Activated naive CD4-positive, alpha-beta T cell treated with anti-CD3 and anti-CD28 coated beads for 36 hours (primary cell): ENCODE measurements at regions of chr5 and their contacts with region 1.

Region 1: GRCh38 chr5:172106511-172107356 is 81.3 kb downstream of the STK10 start:
- DNase-seq: peak; percentile 71
- H3K4me3 Mint-ChIP-seq: no peak overlapping the region
- H3K27ac Mint-ChIP-seq: peak overlapping the region; percentile 50
- H3K4me1 Mint-ChIP-seq: peaks cover 40% of the 10 kb centered on the region
- H3K27me3 Mint-ChIP-seq: no peaks in the 10 kb centered on the region

Region 2: GRCh38 chr5:170312666-170313065 is 1794.1 kb before region 1 on chr5:
- CTCF ChIA-PET with region 1: no interaction called
- intact Hi-C with region 1: loop called (anchors 5 kb)
- DNase-seq: peak; percentile 90
- H3K4me3 Mint-ChIP-seq: peak overlapping the region; percentile 90
- H3K27ac Mint-ChIP-seq: peak overlapping the region; percentile 94
- H3K4me1 Mint-ChIP-seq: peaks cover 68% of the 10 kb centered on the region
- H3K27me3 Mint-ChIP-seq: no peaks in the 10 kb centered on the region

Region 3: DNA sequence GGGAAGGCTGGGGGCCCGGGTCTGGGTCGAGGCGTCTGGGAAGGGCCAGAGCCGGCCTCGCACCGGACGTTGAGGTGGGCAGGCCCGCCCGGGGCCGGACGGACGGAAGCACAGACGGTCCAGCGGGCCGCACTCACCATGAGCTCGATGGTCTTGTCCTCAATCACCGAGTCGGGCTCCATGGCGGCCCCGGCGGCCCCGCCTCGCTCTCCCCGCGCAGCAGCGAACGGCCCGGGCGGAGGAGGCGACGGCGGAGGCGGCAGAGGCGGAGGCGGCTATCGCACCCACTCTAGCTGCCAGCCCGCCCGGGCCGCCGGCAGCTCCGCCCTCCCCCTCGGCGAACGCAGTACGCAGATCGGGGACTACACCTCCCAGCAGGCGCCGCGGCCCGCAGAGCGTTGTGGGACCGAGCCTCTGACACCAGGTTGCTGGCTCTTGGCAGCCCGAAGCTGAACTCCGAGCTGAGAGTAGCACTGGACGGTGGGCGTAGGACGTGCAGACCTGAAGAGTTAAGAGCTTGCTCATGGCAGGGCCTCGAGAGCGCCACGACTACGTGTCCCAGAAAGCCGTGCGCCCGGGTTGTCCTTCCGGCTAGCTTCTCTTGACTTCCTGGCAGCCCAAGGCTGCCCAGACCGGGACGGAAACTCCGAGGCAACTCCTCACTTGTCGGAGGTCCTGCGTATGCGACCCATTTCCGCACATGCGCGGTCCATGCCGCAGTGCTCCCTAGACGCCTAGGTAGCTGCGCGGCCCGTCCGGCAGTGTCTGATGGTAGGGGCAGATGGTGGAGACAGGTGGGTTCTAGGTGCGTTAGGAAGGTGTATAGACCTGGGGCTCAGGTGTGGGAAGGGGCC is 100.2 kb before region 1 on chr5 and contains the start of gene FBXW11:
- CTCF ChIA-PET with region 1: interaction called, 3 read pairs
- intact Hi-C with region 1: loop called (anchors 1 kb)
- DNase-seq: peak; percentile 96
- H3K4me3 Mint-ChIP-seq: peak within 1 kb of the TSS; percentile 96
- H3K27ac Mint-ChIP-seq: peak within 1 kb of the TSS; percentile 99
- H3K4me1 Mint-ChIP-seq: peaks cover 46% of the 10 kb centered on the region
- H3K27me3 Mint-ChIP-seq: no peaks in the 10 kb centered on the region
- total RNA-seq, gene FBXW11: 32.8 to 35.5 TPM

Region 4: DNA sequence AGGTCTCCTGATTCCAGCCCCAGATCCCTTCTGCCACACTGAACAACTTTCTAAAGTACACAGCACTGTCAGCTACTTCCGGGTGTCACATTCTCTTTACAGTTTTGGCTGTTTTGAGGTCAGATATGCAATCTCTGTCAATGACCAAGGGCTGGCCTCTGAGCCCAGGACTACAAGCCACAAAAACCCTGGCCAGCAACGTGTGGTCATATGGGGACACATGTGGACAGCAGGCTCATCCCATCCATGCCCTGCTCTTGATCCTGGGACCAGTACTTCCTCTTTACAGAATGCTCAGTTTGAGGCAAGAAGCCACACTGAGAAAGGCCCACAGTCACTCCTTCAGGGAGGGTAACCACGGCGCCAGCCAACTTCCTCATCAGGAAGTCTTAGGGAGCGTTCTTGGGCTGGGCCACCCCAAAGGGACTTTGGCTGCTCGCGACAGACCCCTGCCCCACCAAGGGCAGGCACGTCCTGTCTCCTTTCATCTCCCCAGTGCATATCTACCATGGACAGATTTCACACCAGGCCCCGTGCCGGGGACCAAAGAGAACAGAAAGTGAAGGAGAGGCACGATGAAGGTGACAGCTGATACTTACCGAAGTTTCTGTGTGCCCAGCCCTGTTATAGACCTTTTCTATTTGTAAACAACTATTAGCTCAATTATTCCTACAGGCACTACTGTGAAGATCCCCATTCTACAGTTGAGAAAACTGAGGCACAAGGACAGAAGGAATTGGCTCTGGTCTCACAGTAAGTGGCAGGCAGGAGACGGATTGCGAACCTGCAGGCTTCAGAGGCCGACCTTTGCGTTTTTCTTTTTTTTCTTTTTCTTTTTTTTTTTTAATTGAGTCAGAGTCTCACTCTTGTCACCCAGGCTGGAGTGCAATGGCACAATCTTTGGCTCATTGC is 44.0 kb after region 1 on chr5:
- CTCF ChIA-PET with region 1: no interaction called
- intact Hi-C with region 1: loop called (anchors 1 kb)
- DNase-seq: peak; percentile 38
- H3K4me3 Mint-ChIP-seq: peak overlapping the region; percentile 64
- H3K27ac Mint-ChIP-seq: peak overlapping the region; percentile 91
- H3K4me1 Mint-ChIP-seq: peaks cover 77% of the 10 kb centered on the region
- H3K27me3 Mint-ChIP-seq: no peaks in the 10 kb centered on the region

Region 5: DNA sequence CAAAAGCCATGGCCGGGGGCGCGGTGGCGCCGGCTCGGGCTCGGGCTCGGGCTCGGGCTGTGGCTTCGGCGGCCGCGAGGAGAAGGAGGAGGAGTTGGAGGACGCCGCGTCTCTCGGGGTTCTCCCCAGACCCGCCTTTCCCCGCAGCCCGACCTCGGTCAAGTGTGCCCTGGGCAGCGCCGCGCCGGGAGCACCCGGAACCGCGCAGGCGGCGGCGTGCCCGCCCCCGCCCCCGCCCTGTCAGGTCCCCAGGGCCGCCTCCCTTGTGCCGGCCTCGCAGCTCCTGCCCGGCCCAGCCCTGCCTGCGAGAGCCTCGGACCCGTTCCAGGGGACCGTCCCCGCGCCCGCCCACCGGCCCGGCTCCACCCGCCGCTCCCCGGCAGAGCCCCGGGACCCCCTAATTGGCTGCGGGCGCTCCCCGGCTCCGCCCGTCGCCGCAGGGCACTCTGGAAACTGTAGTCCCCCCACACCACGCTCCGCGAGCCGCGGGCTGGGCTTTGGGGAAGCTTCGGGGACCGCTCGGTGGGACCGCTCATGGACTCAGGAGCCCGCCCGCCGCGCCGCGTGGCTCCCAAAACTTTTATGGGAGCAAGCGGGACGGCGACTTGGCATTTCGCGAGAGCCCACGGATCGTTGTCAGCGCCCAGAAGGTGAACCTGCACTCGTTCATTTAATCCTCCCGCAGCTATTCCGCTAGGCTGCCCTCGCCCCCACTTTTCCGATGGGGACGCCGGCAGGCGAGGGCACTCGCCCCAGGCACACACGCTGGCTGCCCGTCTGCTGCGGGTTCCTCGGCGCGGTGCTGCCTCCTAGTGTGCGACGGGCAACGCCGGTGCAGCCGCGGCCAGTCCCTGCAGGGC is 81.5 kb after region 1 on chr5 and contains the start of gene STK10:
- CTCF ChIA-PET with region 1: interaction called, 159 read pairs
- intact Hi-C with region 1: loop called (anchors 1 kb)
- DNase-seq: peak; percentile 92
- H3K4me3 Mint-ChIP-seq: peak within 1 kb of the TSS; percentile 91
- H3K27ac Mint-ChIP-seq: peak within 1 kb of the TSS; percentile 92
- H3K4me1 Mint-ChIP-seq: peaks cover 32% of the 10 kb centered on the region
- H3K27me3 Mint-ChIP-seq: no peaks in the 10 kb centered on the region
- total RNA-seq, gene STK10: 44.7 to 55.1 TPM

Region 6: DNA sequence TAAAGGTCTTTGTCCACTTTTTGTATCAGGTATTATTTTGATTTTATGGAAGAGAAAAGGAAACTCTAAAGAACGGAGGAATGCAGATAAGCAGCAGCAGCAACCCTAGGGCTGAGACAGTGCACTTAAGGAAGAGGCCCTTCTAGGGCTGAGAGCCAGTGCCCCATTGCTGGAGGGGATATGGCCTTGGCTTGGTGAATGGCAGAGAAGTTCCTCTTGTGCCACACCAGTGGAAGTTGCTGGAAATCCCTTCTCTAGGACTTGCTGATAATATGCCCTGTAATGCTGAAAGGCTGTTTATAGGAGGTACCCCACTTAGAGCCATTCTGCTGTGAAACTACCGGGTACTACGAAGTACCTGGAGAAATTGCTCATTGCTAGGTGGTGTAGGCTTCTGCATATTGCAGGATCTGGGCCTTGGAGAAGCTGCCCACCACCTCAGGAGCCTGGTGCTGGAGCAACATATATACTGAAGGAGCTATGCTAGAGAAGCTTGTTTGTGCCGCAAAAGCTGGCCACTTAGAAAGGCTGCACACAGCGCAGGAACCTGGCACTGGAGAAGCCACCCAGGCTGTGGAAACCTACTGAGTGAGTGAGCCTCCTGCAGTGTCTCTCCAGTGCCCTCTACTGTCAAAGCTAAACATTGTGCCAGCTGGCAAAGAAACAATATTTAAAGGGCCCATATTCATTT is 186.5 kb after region 1 on chr5:
- CTCF ChIA-PET with region 1: interaction called, 8 read pairs
- intact Hi-C with region 1: loop called (anchors 1 kb)
- DNase-seq: peak; percentile 76
- H3K4me3 Mint-ChIP-seq: no peak overlapping the region
- H3K27ac Mint-ChIP-seq: no peak overlapping the region
- H3K4me1 Mint-ChIP-seq: no peaks in the 10 kb centered on the region
- H3K27me3 Mint-ChIP-seq: peaks cover 3% of the 10 kb centered on the region

Region 7: DNA sequence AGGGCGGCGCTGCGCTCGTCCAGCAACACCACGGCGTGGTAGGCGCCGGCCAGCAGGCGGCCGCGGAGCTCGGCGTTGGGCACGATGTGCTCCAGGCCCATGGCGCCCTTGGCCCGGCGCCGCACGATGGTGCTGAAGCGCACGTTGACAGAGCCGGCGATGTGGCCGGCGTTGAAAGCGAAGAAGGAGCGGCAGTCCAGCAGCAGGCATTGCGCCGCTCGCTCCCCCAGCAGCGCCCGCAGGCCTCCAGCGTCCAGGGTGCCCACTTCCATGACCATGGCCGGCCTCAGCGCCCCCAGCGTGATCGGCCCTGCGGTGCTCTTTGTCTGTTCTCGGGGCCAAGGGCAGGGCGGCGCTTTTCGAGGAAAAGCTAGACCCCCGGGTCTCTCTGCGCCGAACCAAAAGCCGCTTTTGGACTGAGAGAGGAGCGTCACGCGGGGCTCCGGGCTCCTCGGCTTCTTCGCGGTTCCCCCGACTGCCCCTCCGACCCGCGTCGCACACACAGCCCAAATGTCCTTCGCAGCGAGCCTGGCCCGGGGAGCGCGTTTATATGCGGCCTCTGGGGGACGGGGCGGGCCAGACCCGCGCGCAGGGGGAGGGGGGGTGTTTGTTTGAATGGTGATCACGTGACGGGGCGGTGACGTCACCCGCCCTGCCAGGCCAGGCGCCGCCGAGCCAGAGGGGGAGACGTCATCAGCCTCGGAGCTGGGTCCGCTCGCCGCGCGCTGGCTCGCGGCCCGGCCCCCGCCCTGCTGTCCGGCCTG is 664.1 kb after region 1 on chr5 and contains the start of gene DUSP1:
- CTCF ChIA-PET with region 1: no interaction called
- intact Hi-C with region 1: loop called (anchors 5 kb)
- DNase-seq: peak; percentile 96
- H3K4me3 Mint-ChIP-seq: peak within 1 kb of the TSS; percentile 90
- H3K27ac Mint-ChIP-seq: peak within 1 kb of the TSS; percentile 93
- H3K4me1 Mint-ChIP-seq: peaks cover 66% of the 10 kb centered on the region
- H3K27me3 Mint-ChIP-seq: no peaks in the 10 kb centered on the region
- total RNA-seq, gene DUSP1: 7.0 to 7.3 TPM